Activated naive CD4-positive, alpha-beta T cell treated with anti-CD3 and anti-CD28 coated beads for 36 hours (primary cell): ENCODE measurements at regions of chr6 and their contacts with region 1.

Region 1: GRCh38 chr6:159080217-159080976 is 35.6 kb upstream of the TAGAP start:
- DNase-seq: peak; percentile 79
- H3K4me3 Mint-ChIP-seq: peak overlapping the region; percentile 9
- H3K27ac Mint-ChIP-seq: peak overlapping the region; percentile 89
- H3K4me1 Mint-ChIP-seq: peaks cover 49% of the 10 kb centered on the region
- H3K27me3 Mint-ChIP-seq: no peaks in the 10 kb centered on the region

Region 2: GRCh38 chr6:159062564-159062945 is 17.8 kb before region 1 on chr6:
- CTCF ChIA-PET with region 1: interaction called, 7 read pairs
- intact Hi-C with region 1: loop called (anchors 1 kb)
- DNase-seq: peak; percentile 77
- H3K4me3 Mint-ChIP-seq: peak overlapping the region; percentile 6
- H3K27ac Mint-ChIP-seq: peak overlapping the region; percentile 91
- H3K4me1 Mint-ChIP-seq: peaks cover 95% of the 10 kb centered on the region
- H3K27me3 Mint-ChIP-seq: no peaks in the 10 kb centered on the region

Region 3: GRCh38 chr6:159092631-159093030 is 12.2 kb after region 1 on chr6:
- CTCF ChIA-PET with region 1: interaction called, 14 read pairs
- intact Hi-C with region 1: loop called (anchors 1 kb)
- DNase-seq: no peak
- H3K4me3 Mint-ChIP-seq: no peak overlapping the region
- H3K27ac Mint-ChIP-seq: peak overlapping the region; percentile 33
- H3K4me1 Mint-ChIP-seq: peaks cover 68% of the 10 kb centered on the region
- H3K27me3 Mint-ChIP-seq: no peaks in the 10 kb centered on the region

Region 4: DNA sequence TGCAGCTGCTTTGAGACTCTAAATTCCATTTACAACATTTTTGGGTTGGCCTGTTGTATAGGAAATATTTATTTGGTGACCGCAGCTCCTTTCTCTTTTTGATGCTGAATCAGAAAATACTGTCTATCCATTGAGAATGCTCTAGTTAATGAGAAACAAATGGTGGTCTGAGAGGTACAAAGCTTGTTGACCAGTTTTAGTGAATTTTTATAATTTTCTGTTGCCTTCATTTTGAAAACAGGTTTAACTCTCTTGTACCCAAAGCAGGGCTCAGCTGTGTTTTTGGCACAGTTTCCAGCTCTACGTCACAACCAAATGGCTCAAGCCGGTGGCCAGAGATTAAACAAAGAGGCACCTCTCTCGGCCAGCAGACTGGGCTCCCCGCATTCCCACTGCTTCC is 202.0 kb after region 1 on chr6:
- CTCF ChIA-PET with region 1: no interaction called
- intact Hi-C with region 1: no loop called
- DNase-seq: no peak
- H3K4me3 Mint-ChIP-seq: no peak overlapping the region
- H3K27ac Mint-ChIP-seq: no peak overlapping the region
- H3K4me1 Mint-ChIP-seq: no peaks in the 10 kb centered on the region
- H3K27me3 Mint-ChIP-seq: peaks cover 4% of the 10 kb centered on the region

Region 5: GRCh38 chr6:159298840-159299239 is 218.4 kb after region 1 on chr6:
- CTCF ChIA-PET with region 1: no interaction called
- intact Hi-C with region 1: no loop called
- DNase-seq: no peak
- H3K4me3 Mint-ChIP-seq: no peak overlapping the region
- H3K27ac Mint-ChIP-seq: no peak overlapping the region
- H3K4me1 Mint-ChIP-seq: no peaks in the 10 kb centered on the region
- H3K27me3 Mint-ChIP-seq: peaks cover 14% of the 10 kb centered on the region